PC-9 (cell line): ENCODE measurements at regions of chr10 and their contacts with region 1.

Region 1: GRCh38 chr10:70381471-70382421 is 679 bp downstream of the LRRC20 start:
- DNase-seq: peak in 1 of 2 experiments; percentile 52
- H3K4me3 ChIP-seq: peak overlapping the region; percentile 89
- H3K27ac ChIP-seq: no peak overlapping the region
- H3K4me1 ChIP-seq: peaks cover 29% of the 10 kb centered on the region
- H3K27me3 ChIP-seq: no peaks in the 10 kb centered on the region
- CTCF ChIP-seq: no peak

Region 2: GRCh38 chr10:70404036-70404786 is 22.5 kb after region 1 on chr10 and contains the start of gene EIF4EBP2:
- CTCF ChIA-PET with region 1: interaction called, 19 read pairs
- POLR2A ChIA-PET with region 1: interaction called, 6 read pairs
- intact Hi-C with region 1: no loop called
- DNase-seq: peak; percentile 86 to 99
- H3K4me3 ChIP-seq: peak within 1 kb of the TSS; percentile 82
- H3K27ac ChIP-seq: peak within 1 kb of the TSS; percentile 70
- H3K4me1 ChIP-seq: peaks cover 24% of the 10 kb centered on the region
- H3K27me3 ChIP-seq: no peaks in the 10 kb centered on the region
- CTCF ChIP-seq: no peak; the same call in 1 of the 2 replicates
- total RNA-seq, gene EIF4EBP2: 57.4 and 80.3 TPM in 2 replicates

Region 3: GRCh38 chr10:70418229-70418628 is 36.5 kb after region 1 on chr10:
- CTCF ChIA-PET with region 1: interaction called, 12 read pairs
- POLR2A ChIA-PET with region 1: no interaction called
- intact Hi-C with region 1: no loop called
- DNase-seq: no peak
- H3K4me3 ChIP-seq: no peak overlapping the region
- H3K27ac ChIP-seq: no peak overlapping the region
- H3K4me1 ChIP-seq: no peaks in the 10 kb centered on the region
- H3K27me3 ChIP-seq: no peaks in the 10 kb centered on the region
- CTCF ChIP-seq: no peak

Region 4: GRCh38 chr10:70820976-70821755 is 439.4 kb after region 1 on chr10:
- CTCF ChIA-PET with region 1: no interaction called
- POLR2A ChIA-PET with region 1: no interaction called
- intact Hi-C with region 1: no loop called
- DNase-seq: peak in 1 of 2 experiments; percentile 69
- H3K4me3 ChIP-seq: no peak overlapping the region
- H3K27ac ChIP-seq: no peak overlapping the region
- H3K4me1 ChIP-seq: peaks cover 54% of the 10 kb centered on the region
- H3K27me3 ChIP-seq: no peaks in the 10 kb centered on the region
- CTCF ChIP-seq: peak; percentile 29; the same call in 1 of the 2 replicates